Caco-2 (cell line): ENCODE measurements at regions of chr5 and their contacts with region 1.

Region 1: DNA sequence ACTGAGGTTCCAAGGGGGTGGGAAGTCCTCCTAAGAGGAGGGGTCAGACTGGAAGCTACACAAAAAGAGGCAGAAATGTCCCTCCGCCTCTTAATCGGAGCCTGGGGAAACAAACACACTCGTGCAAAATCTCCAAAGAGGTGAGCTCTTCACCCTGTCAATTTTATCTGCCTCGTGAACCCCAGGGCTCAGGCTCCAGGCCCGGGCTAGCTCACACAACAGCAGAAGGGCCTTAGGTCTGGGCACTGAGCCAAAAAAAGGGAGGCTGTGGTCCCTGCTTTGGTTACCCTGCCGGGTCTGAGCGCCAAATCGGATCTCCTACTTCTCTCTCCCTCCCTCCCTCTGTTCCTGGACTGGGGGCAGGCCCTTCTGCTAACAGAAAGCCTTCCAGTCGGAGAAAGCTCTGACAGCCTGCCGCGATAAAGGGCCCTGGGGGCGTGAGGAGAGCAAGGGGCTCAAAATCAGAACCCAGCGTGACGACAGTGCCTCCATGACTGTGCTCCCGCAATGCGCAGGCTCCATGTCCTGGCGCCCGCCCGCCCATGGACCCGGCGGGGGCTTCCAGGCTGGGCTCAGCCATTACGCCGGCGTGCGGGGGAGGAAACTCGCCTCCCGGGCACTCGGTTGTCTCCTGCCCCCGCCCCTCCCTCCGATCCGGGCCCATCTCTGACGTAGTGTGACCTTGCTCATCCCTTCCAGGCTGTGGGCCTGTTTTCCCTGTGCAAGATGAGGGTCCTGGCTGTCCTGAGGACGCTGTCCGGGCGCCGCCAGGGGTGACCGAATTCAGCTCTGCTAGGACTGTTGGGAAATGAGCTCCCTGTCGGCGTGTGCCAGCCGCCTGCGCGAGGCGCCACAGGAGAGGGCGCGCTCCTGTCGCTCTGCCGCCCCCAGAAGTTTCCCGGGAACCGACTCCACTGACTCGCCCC is 865 bp upstream of the SLC22A4 start:
- DNase-seq: peak; percentile 89 to 91
- H3K4me3 ChIP-seq: peak overlapping the region; percentile 55
- H3K4me3 Mint-ChIP-seq: peak overlapping the region; percentile 85
- H3K27ac Mint-ChIP-seq: peak overlapping the region; percentile 93
- H3K4me1 ChIP-seq: peaks cover 8% of the 10 kb centered on the region; the same call in 1 of the 2 replicates
- H3K4me1 Mint-ChIP-seq: peaks cover 12% of the 10 kb centered on the region
- H3K27me3 ChIP-seq: no peaks in the 10 kb centered on the region
- H3K27me3 Mint-ChIP-seq: no peaks in the 10 kb centered on the region
- CTCF ChIP-seq: peak in 1 of 2 experiments; percentile 13

Region 2: DNA sequence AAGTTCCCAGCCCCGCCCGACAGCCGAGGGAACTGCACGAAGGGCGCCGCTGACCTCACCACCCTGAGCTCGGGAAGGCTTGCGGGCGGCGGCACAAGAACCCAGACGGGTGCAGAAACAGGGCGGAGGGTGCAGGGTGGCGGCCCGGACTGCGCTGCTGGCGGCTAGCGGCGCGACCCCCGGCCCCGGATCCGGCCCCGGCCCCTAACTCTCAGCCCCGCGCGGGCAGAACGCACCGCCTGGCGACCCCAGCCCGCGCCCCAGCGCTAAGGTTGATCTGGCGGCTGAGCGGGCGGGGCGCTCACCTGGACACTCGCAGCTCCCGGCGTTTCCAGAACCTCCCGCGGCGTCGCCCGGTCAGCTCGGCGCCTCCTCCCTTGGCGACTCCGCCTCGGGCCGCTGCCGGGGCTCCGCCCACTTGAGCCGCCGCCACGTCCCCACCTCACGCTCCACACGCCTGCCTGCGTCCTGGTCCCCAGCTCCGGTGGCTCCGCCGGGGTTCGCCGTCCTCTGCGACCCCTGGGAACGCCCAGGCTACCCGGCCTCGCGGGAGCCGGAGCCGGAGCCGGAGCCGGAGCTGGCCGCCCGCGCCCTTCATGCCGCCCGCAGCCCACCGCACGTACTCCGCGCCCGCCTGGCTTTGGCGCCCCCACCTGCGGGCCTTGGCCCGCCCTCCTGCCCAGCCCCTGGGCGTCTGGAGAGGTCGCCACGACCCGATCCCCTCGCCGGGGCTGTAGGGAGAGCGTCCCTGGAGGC is 65.7 kb before region 1 on chr5 and contains the start of gene P4HA2:
- CTCF ChIA-PET with region 1: interaction called, 3 read pairs
- POLR2A ChIA-PET with region 1: interaction called, 17 read pairs
- intact Hi-C with region 1: no loop called
- DNase-seq: peak; percentile 89 to 91
- H3K4me3 ChIP-seq: peak within 1 kb of the TSS; percentile 59
- H3K4me3 Mint-ChIP-seq: peak within 1 kb of the TSS; percentile 77
- H3K27ac Mint-ChIP-seq: peak within 1 kb of the TSS; percentile 44
- H3K4me1 ChIP-seq: peaks cover 5% of the 10 kb centered on the region; the same call in 1 of the 2 replicates
- H3K4me1 Mint-ChIP-seq: peaks cover 5% of the 10 kb centered on the region
- H3K27me3 ChIP-seq: no peaks in the 10 kb centered on the region
- H3K27me3 Mint-ChIP-seq: no peaks in the 10 kb centered on the region
- CTCF ChIP-seq: peak in 1 of 2 experiments; percentile 10
- total RNA-seq, gene P4HA2: 41.0 and 42.3 TPM in 2 replicates

Region 3: DNA sequence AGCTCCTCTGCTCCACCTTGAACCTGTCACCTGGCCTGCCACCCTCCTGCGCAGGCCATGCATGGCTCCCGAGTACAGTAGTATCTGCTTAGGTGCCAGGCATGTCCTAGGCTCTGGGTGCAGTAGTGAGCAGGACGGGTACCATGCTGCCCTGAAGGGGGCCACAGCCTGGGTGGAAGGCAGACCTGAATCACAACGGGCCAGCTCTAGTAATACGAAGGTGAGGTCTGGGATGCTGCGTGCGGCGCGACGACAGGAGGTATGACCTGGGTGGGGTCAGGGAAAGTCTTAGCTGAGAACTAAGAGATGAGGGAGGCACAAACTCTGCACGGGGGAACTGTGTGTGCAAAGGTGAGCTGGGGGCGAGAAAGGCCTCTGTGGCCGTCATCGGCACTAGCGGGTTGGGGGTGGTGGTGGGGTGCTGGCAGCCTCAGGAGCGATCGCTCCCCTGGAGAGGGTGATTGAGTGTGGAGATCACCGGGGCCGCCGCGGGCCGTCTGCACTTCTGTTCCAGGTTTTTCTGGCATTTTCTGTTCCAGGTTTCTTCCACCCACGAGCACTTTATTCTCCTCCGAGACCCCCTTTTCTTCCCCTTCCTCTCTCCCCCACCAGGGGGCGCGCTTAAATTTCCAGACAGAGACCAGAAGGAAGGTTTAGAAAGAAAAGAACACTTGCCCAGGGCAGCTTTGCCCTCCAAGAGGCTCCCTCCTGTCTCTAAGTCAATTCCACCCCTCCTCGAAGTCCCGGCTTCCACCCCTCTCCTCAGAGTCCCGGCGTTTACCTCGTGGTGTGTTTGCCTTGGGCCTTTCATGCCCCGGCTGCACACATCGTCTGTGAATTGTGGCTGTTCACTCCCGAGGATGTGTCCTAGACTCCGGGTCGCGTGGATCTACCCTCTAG is 20.8 kb before region 1 on chr5:
- CTCF ChIA-PET with region 1: interaction called, 27 read pairs
- POLR2A ChIA-PET with region 1: interaction called, 36 read pairs
- intact Hi-C with region 1: no loop called
- DNase-seq: peak; percentile 81 to 86
- H3K4me3 ChIP-seq: no peak overlapping the region
- H3K4me3 Mint-ChIP-seq: no peak overlapping the region
- H3K27ac Mint-ChIP-seq: no peak overlapping the region
- H3K4me1 ChIP-seq: peaks cover 30% of the 10 kb centered on the region
- H3K4me1 Mint-ChIP-seq: peaks cover 32% of the 10 kb centered on the region
- H3K27me3 ChIP-seq: no peaks in the 10 kb centered on the region
- H3K27me3 Mint-ChIP-seq: no peaks in the 10 kb centered on the region
- CTCF ChIP-seq: peak; percentile 86 to 88

Region 4: DNA sequence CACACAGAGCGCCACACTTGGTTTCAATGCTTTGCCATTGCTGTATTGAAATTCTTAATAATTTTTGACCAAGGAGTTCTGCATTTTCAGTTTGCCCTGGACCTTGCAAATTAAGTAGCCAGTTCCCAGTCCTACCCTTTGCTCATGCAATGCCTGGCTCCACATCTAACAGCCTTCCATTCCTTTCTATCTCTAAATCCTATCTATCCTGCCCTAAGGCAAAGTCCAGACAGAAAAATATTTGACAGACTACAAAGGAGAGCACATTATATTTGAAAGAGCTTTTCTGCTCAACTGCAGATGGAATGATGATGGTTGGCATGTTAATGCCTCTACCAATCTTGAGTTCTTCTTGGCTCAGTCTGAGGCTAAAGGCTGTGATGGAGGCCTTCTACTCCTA is 16.3 kb after region 1 on chr5:
- CTCF ChIA-PET with region 1: interaction called, 3 read pairs
- POLR2A ChIA-PET with region 1: interaction called, 6 read pairs
- intact Hi-C with region 1: loop called (anchors 1 kb)
- DNase-seq: peak in 1 of 2 experiments; percentile 27
- H3K4me3 ChIP-seq: no peak overlapping the region
- H3K4me3 Mint-ChIP-seq: no peak overlapping the region
- H3K27ac Mint-ChIP-seq: no peak overlapping the region
- H3K4me1 ChIP-seq: peaks cover 25% of the 10 kb centered on the region
- H3K4me1 Mint-ChIP-seq: peaks cover 11% of the 10 kb centered on the region
- H3K27me3 ChIP-seq: no peaks in the 10 kb centered on the region
- H3K27me3 Mint-ChIP-seq: no peaks in the 10 kb centered on the region
- CTCF ChIP-seq: no peak

Region 5: GRCh38 chr5:132369474-132370180 is 76.3 kb after region 1 on chr5 and contains the start of gene SLC22A5:
- CTCF ChIA-PET with region 1: interaction called, 10 read pairs
- POLR2A ChIA-PET with region 1: interaction called, 15 read pairs
- intact Hi-C with region 1: loop called (anchors 1 kb)
- DNase-seq: peak; percentile 86 to 90
- H3K4me3 ChIP-seq: peak within 1 kb of the TSS; percentile 79
- H3K4me3 Mint-ChIP-seq: peak within 1 kb of the TSS; percentile 79
- H3K27ac Mint-ChIP-seq: peak within 1 kb of the TSS; percentile 85
- H3K4me1 ChIP-seq: peaks cover 44% of the 10 kb centered on the region
- H3K4me1 Mint-ChIP-seq: peaks cover 21% of the 10 kb centered on the region
- H3K27me3 ChIP-seq: no peaks in the 10 kb centered on the region
- H3K27me3 Mint-ChIP-seq: no peaks in the 10 kb centered on the region
- CTCF ChIP-seq: no peak
- total RNA-seq, gene SLC22A5: 19.1 and 20.2 TPM in 2 replicates